Naive thymus-derived CD8-positive, alpha-beta T cell (primary cell): ENCODE measurements at regions of chr14 and their contacts with region 1.

Region 1: DNA sequence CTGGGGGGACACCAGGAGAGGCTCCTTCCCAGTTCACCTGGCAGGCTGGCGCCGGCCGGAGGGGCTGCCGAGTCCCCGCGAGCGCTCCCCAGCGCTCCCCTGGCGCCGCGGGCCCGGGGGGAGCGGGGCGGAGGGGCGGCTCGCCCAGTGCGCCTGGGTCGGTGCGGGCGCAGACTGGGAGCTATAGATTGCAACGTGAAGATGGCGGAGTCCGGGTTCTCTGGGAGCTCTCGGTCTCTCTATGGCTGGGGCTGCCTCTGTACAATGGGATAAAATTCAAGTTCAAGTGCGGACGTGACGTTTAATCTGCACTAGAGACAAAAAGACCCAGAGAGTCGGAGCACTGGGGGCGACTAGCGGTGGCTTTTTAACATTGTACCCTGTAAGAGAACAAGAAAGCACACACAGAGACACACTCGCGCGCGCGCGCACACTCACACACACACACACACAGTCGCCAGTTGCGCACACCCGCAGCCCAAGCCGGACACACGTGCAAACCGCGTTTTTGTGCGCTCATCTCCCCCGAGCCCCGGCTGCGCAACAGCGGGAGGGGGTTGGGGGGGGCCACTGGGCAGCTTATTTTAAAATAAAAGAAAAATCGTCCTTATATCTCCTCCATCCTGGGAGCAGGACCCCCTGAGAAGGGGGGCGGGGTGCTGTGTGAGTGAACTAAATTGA is at the start of gene BCL11B:
- DNase-seq: peak; percentile 73 to 96 (median 87)
- ATAC-seq: peak; percentile 69 to 79
- H3K4me3 Mint-ChIP-seq: peak within 1 kb of the TSS; percentile 90 to 100 (median 96)
- H3K27ac Mint-ChIP-seq: peak within 1 kb of the TSS; percentile 93 to 99 (median 96)
- H3K4me1 Mint-ChIP-seq: peaks cover 13 to 56% (median 32%) of the 10 kb centered on the region in 4 donors
- H3K27me3 Mint-ChIP-seq: peaks cover 0 to 9% (median 0%) of the 10 kb centered on the region in 5 donors
- polyA plus RNA-seq, gene BCL11B: 8.2 to 12.1 (median 9.5) TPM

Region 2: GRCh38 chr14:98198385-98198784 is 1073.7 kb before region 1 on chr14:
- POLR2A ChIA-PET with region 1: interaction called, 327 read pairs
- DNase-seq: peak in 3 of 10 donors; percentile 31 to 45 (median 42)
- ATAC-seq: peak; percentile 42 to 62
- H3K4me3 Mint-ChIP-seq: peak overlapping the region; percentile 20 to 87 (median 70)
- H3K27ac Mint-ChIP-seq: peak overlapping the region; percentile 70 to 100 (median 96)
- H3K4me1 Mint-ChIP-seq: peaks cover 57 to 99% (median 89%) of the 10 kb centered on the region in 4 donors
- H3K27me3 Mint-ChIP-seq: no peaks in the 10 kb centered on the region

Region 3: DNA sequence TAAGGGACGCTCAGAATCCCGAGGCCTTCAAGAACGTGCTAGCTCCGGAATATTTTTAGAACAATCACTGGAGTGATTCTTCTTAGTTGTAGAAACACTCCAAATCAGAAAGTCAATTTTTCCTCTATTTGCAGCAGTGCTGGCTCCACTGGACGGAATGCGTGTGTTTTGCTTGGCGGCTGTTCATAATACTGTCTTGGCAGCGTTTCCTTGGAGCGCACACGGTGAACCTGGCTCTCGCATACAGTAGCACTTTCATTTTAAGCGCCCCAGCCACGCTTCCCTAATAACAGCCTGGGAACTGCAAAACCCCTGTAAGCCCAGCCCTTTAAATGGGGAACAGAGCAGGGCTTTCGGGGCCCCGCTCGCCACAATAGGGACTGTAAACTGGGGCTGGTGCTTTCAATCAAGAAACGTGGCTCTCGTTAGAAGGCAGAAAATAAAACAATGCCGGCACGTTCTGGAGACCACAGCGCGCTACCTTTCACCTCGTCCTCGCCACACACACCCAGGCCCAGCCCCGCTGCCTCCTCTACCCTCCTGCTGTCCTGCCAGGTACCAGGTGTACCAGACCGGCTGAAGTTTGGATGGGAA is 80.0 kb before region 1 on chr14:
- POLR2A ChIA-PET with region 1: interaction called, 446 read pairs
- DNase-seq: peak in 3 of 10 donors; percentile 40 to 59 (median 46)
- ATAC-seq: peak; percentile 24 to 37
- H3K4me3 Mint-ChIP-seq: peak overlapping the region; percentile 79 to 98 (median 87)
- H3K27ac Mint-ChIP-seq: peak overlapping the region; percentile 93 to 99 (median 98)
- H3K4me1 Mint-ChIP-seq: peaks cover 51 to 97% (median 93%) of the 10 kb centered on the region in 4 donors
- H3K27me3 Mint-ChIP-seq: no peaks in the 10 kb centered on the region

Region 4: DNA sequence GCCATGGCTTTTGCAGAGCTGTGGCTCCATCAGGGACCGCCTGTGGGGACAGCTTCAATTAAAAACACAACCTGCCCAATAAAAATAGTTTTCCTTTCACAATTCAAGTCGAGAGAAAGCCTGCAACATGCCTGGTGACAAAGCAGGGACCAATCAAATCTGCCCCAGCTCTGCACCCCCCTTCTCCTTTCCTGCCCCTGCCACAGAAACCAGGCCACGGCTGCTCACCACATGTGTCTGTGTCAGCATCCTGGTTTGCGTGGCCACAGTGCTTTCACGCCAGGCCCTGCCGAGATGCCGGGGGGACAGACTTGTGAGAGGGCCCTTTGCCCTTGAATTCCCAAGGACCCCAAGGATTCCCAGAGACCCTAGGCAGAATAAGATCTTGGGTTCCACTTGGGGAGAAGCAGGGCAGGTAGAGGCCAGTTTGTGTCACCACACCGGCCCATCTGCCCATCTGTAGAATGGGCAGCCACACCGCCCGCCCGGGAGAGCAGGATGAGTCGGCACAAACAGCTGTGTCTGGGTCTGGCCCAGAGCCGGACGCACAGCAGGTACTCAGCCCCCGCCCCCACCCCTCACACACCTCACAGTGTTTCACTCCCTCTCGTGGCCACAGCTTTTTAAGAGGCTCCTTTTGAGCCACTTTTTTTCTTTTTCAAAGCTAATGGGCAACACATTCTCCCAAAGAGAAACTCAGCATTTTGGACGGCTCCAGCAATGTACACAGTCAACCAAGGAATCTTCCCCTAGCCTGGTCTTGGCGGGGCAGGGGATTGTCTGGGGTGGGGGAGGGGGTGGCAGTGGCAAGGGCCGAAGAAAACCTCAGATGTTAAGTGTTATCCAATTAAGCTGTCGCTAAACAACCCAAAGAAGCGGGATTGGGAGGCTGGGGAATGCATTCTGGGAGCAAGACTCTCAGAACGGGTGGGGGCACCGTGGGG is 41.6 kb before region 1 on chr14:
- POLR2A ChIA-PET with region 1: interaction called, 1,316 read pairs
- DNase-seq: peak; percentile 69 to 93 (median 88)
- ATAC-seq: peak; percentile 46 to 76
- H3K4me3 Mint-ChIP-seq: peak overlapping the region; percentile 71 to 94 (median 82)
- H3K27ac Mint-ChIP-seq: peak overlapping the region; percentile 97 to 100 (median 98)
- H3K4me1 Mint-ChIP-seq: peaks cover 65 to 97% (median 95%) of the 10 kb centered on the region in 4 donors
- H3K27me3 Mint-ChIP-seq: no peaks in the 10 kb centered on the region

Region 5: DNA sequence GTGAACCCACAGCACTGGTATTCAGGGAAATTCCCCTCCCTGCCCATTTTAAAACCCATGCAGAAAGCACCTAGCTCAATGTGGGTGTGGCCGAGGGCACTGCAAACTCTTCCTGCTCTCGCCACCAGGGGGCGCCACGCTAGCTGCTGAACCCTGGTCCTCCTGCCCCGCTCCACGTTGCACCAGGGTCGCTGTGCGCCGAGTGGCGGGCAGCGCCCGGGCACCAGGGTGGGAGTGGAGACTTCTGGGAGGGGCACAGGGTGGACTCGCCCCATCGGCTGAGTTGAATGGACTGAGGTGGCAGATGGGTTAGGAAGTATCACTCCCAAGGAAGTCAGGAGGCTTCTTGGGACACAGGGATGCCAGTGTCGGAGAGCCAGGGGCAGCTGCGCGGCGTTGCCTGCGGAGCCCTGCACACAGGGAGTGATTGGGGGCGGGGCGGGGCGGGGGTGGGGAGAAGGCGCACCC is 48.0 kb after region 1 on chr14:
- POLR2A ChIA-PET with region 1: no interaction called
- DNase-seq: peak; percentile 42 to 78 (median 61)
- ATAC-seq: peak; percentile 80 to 87
- H3K4me3 Mint-ChIP-seq: peak overlapping the region in 1 of 10 donors; percentile 22
- H3K27ac Mint-ChIP-seq: peak overlapping the region in 1 of 10 donors; percentile 11
- H3K4me1 Mint-ChIP-seq: peaks cover 0 to 18% (median 10%) of the 10 kb centered on the region in 4 donors
- H3K27me3 Mint-ChIP-seq: peaks cover 0 to under 1% (median 0%) of the 10 kb centered on the region in 5 donors